Panc1 (cell line): ENCODE measurements at regions of chr7 and their contacts with region 1.

Region 1: DNA sequence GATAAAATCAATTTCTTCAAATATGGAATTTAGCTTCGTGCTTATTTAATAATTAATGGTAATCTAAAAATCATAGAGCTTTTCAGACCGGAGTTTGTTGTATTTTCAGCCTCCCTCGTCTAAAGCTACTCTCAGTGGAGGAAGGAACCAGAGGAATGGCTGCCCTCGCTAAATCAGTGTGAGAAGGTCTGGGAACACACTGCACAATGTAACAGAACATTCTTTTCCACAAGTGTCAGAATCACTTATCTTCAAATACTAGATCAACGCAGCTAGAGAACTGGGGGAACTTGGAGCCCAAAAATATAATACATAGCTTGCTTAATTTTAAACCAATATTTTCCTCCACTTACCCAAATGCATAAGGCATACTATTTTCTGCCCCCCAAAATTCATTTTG is 148.5 kb downstream of the MTERF1 start:
- DNase-seq: no peak
- ATAC-seq: no peak
- H3K4me3 ChIP-seq: no peak overlapping the region
- H3K27ac ChIP-seq: no peak overlapping the region
- H3K4me1 ChIP-seq: no peaks in the 10 kb centered on the region
- H3K27me3 ChIP-seq: no peaks in the 10 kb centered on the region
- CTCF ChIP-seq: no peak

Region 2: DNA sequence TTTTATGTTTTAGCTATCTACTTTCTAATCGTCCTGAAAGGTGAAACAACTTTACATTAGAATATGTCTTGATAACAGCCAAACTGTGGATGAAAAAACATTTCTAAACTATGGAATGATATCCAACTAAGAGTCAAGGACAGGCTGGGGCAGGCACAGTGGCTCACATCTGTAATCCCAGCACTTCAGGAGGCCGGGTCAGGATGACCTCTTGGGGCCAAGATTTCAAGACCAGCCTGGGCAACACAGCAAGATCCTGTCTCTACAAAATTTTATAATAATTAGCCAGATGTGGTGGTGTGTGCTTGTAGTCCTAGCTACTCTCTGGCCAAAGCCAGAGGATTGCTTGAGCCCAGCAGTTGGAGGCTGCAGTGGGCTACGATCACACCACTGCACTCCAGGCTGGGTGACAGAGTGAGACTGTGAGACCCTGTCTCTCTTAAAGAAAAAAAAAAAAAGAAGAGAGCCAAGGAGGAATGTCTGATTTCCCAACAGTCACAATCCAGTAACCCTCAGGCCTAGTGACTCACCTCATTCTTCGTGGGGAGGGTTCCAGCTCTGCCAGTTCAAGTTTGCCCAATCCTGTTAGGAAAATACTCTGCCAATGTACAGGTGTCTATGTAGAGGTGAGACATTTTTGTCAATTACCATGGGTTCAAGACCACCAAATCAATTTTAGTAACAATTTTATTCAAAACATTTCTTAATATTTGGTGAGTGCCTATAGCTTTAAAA is 482.3 kb before region 1 on chr7:
- CTCF ChIA-PET with region 1: interaction called, 11 read pairs
- POLR2A ChIA-PET with region 1: no interaction called
- in situ Hi-C with region 1: no loop called
- intact Hi-C with region 1: no loop called
- DNase-seq: no peak
- ATAC-seq: no peak
- H3K4me3 ChIP-seq: no peak overlapping the region
- H3K27ac ChIP-seq: no peak overlapping the region
- H3K4me1 ChIP-seq: no peaks in the 10 kb centered on the region
- H3K27me3 ChIP-seq: no peaks in the 10 kb centered on the region
- CTCF ChIP-seq: no peak

Region 3: DNA sequence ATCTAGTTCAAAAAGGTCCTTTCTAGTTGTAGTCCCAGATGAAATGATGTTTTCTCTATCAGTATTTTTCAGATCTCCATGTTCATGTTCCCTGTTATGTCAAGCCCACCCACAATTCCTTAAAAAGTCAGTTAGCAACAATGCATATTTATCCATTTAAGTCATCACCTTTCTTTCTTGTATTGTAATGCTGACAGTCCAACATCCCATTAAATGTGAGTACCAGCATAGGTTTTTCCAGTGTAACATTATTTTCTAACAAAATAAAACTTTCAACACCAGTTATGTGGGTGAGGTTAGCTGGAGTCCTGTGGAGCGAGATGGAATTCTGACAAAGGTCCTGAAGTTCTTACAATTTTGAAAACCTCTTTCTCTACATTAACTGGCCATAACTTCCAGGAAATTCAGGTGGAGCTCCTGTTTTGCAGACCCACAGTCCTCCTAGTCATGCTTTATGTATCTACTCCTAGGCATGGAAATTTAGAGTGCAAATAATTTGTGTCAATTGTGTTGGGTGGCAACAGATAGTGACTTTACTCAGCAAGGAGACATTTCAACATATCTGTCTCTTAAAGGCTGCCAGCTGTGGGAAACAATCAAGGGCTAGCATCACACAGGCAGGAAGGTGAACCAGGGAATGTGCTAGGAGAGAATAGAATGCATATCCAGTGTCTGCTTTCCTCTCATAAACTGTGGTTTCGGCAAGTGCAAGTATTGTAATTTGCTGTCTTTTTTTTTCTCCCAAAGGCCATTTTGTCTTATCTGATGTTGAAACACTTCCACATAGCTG is 14.1 kb before region 1 on chr7:
- CTCF ChIA-PET with region 1: no interaction called
- POLR2A ChIA-PET with region 1: no interaction called
- in situ Hi-C with region 1: no loop called
- intact Hi-C with region 1: no loop called
- DNase-seq: no peak
- ATAC-seq: no peak
- H3K4me3 ChIP-seq: no peak overlapping the region
- H3K27ac ChIP-seq: no peak overlapping the region
- H3K4me1 ChIP-seq: no peaks in the 10 kb centered on the region
- H3K27me3 ChIP-seq: no peaks in the 10 kb centered on the region
- CTCF ChIP-seq: no peak